Ovary (tissue), 10 donors: ENCODE measurements at regions of chr15 and their contacts with region 1.

Region 1: GRCh38 chr15:23039151-23039916 is at the start of gene TUBGCP5:
- DNase-seq: peak; percentile 97 to 99 (median 98)
- H3K4me3 ChIP-seq: peak within 1 kb of the TSS; percentile 69
- H3K27ac ChIP-seq: peak within 1 kb of the TSS; percentile 48 to 60
- H3K4me1 ChIP-seq: peaks cover 1% of the 10 kb centered on the region
- H3K27me3 ChIP-seq: no peaks in the 10 kb centered on the region
- CTCF ChIP-seq: peak; percentile 40 to 71 (median 67)
- EP300 ChIP-seq: no peak
- POLR2A ChIP-seq: peak; percentile 69
- total RNA-seq, gene TUBGCP5: 10.2 to 25.6 (median 16.4) TPM

Region 2: DNA sequence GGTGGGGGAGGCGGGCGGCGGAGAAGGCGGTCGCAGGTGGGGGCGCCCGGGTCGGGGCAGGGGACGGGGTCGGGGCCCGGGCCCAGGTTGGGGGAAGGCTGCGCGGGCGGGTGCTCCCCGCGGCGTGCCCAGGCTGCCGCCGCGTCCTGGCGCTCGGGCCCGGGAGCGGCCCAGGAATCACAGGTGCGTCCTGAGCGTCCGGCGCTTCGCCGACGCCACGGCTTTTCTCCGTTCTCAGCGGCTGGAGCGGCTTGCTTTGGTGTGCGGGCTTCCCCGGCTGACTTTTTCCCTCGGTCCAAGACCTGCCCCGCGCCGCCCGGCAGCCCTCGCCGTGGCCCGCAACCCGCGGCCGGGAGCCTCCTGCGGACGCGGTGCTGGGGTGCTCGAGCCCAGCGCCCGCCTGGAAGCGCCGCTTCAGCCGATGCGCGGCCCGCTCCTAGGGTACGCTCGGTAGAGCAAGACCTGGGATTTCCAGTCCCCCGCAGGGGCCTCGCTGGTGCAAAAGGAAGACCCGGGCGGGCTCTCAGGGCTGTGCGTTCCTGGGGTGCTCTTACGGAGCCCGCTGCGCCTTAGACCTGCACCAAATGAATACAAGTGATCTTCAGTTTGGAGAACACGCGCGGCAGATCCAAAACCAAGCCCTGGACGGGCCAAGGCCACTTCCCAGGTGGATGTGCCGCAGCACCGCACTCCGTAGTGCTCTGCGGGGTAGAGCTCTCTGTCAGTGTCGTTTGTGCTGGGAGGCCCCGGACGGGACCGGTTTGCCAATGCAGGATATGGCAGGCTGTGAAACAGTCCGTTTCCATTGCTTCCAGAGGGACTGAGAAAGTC is 252.3 kb before region 1 on chr15:
- intact Hi-C with region 1: loop called in 1 of 4 experiments (anchors 5 kb)
- DNase-seq: peak in 2 of 5 donors; percentile 9 to 35
- H3K4me3 ChIP-seq: peak overlapping the region; percentile 83
- H3K27ac ChIP-seq: no peak overlapping the region
- H3K4me1 ChIP-seq: no peaks in the 10 kb centered on the region
- H3K27me3 ChIP-seq: no peaks in the 10 kb centered on the region
- CTCF ChIP-seq: no peak
- EP300 ChIP-seq: no peak
- POLR2A ChIP-seq: no peak

Region 3: DNA sequence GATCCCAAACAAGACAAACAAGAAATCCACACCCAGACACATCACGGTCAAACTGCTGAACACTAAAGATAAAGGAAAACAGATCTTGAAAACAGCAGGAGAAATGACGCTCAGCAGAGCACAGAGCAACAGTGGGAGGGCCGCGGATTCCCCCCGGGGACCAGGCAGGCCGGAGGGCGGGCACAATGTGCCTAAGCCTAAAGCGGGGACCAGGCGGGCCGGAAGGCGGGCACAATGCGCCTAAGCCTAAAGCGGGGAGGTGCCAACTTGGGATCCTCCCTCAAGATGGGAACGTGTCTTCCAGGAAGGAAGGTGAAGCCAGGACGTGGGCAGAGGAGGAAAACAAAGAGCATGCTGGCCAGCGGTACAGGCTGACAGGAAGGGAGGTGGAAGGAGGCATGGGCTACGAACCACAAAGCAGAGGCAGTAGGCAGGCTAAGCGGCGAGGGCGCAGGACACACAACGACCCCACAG is 90.2 kb before region 1 on chr15:
- intact Hi-C with region 1: loop called in 1 of 4 experiments (anchors 10 kb)
- DNase-seq: peak; percentile 43 to 83 (median 66)
- H3K4me3 ChIP-seq: no peak overlapping the region
- H3K27ac ChIP-seq: peak overlapping the region in 1 of 2 donors; percentile 62
- H3K4me1 ChIP-seq: peaks cover 24% of the 10 kb centered on the region
- H3K27me3 ChIP-seq: no peaks in the 10 kb centered on the region
- CTCF ChIP-seq: no peak
- EP300 ChIP-seq: no peak
- POLR2A ChIP-seq: no peak

Region 4: GRCh38 chr15:22968366-22968765 is 71.0 kb before region 1 on chr15:
- intact Hi-C with region 1: loop called in 1 of 4 experiments (anchors 10 kb)
- DNase-seq: no peak
- H3K4me3 ChIP-seq: no peak overlapping the region
- H3K27ac ChIP-seq: no peak overlapping the region
- H3K4me1 ChIP-seq: peaks cover 8% of the 10 kb centered on the region
- H3K27me3 ChIP-seq: no peaks in the 10 kb centered on the region
- CTCF ChIP-seq: no peak
- EP300 ChIP-seq: no peak
- POLR2A ChIP-seq: no peak